ENCODE measurements at regions of chr1 and their contacts with region 1.

Region 1: GRCh38 chr1:219173758-219174588 is at the start of gene LYPLAL1:
- DNase-seq: peak; percentile 94
- ATAC-seq: peak; percentile 81
- H3K4me3 ChIP-seq: peak within 1 kb of the TSS; percentile 70 to 87 (median 80)
- H3K4me3 Mint-ChIP-seq: peak within 1 kb of the TSS; percentile 99
- H3K27ac ChIP-seq: peak within 1 kb of the TSS; percentile 93 to 95
- H3K27ac Mint-ChIP-seq: peak within 1 kb of the TSS; percentile 99
- H3K4me1 ChIP-seq: peaks cover 27 to 38% of the 10 kb centered on the region in 2 donors
- H3K4me1 Mint-ChIP-seq: peaks cover 54% of the 10 kb centered on the region
- H3K27me3 ChIP-seq: no peaks in the 10 kb centered on the region
- H3K27me3 Mint-ChIP-seq: no peaks in the 10 kb centered on the region
- CTCF ChIP-seq: peak; percentile 19
- total RNA-seq, gene LYPLAL1: 63.6 and 65.4 TPM in 2 replicates

Region 2: DNA sequence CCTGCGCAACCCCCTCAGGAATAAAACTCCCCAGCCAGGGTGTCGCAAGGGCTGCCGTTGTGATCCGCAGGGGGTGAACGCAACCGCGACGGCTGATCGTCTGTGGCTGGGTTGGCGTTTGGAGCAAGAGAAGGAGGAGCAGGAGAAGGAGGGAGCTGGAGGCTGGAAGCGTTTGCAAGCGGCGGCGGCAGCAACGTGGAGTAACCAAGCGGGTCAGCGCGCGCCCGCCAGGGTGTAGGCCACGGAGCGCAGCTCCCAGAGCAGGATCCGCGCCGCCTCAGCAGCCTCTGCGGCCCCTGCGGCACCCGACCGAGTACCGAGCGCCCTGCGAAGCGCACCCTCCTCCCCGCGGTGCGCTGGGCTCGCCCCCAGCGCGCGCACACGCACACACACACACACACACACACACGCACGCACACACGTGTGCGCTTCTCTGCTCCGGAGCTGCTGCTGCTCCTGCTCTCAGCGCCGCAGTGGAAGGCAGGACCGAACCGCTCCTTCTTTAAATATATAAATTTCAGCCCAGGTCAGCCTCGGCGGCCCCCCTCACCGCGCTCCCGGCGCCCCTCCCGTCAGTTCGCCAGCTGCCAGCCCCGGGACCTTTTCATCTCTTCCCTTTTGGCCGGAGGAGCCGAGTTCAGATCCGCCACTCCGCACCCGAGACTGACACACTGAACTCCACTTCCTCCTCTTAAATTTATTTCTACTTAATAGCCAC is 828.1 kb before region 1 on chr1:
- CTCF ChIA-PET with region 1: no interaction called
- POLR2A ChIA-PET with region 1: no interaction called
- intact Hi-C with region 1: loop called (anchors 5 kb)
- DNase-seq: peak; percentile 83
- ATAC-seq: peak; percentile 73
- H3K4me3 ChIP-seq: peak overlapping the region; percentile 59 to 83 (median 75)
- H3K4me3 Mint-ChIP-seq: no peak overlapping the region
- H3K27ac ChIP-seq: peak overlapping the region; percentile 21 to 37
- H3K27ac Mint-ChIP-seq: no peak overlapping the region
- H3K4me1 ChIP-seq: peaks cover 39% of the 10 kb centered on the region in 2 donors
- H3K4me1 Mint-ChIP-seq: peaks cover 40% of the 10 kb centered on the region
- H3K27me3 ChIP-seq: no peaks in the 10 kb centered on the region
- H3K27me3 Mint-ChIP-seq: no peaks in the 10 kb centered on the region
- CTCF ChIP-seq: no peak

Region 3: DNA sequence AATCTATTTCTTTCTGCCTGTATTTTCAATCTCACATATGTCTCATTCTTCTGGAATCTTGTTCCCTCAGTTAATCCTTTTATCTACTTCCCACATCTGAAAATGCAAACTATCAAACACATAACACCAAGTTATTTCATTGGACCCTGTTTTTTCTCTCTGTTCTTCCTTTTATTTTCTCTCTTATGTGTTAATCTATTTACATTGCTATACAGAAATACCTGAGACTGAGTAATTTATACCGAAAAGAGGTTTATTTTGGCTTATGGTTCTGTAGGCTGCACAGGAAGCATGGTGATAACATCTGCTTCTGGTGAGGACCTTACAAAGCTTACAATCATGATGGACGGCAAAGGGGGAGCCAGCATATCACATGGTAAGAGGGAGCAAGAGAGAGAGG is 581.3 kb before region 1 on chr1:
- CTCF ChIA-PET with region 1: no interaction called
- POLR2A ChIA-PET with region 1: no interaction called
- intact Hi-C with region 1: no loop called
- DNase-seq: no peak
- ATAC-seq: no peak
- H3K4me3 ChIP-seq: no peak overlapping the region
- H3K4me3 Mint-ChIP-seq: no peak overlapping the region
- H3K27ac ChIP-seq: no peak overlapping the region
- H3K27ac Mint-ChIP-seq: no peak overlapping the region
- H3K4me1 ChIP-seq: no peaks in the 10 kb centered on the region
- H3K4me1 Mint-ChIP-seq: no peaks in the 10 kb centered on the region
- H3K27me3 ChIP-seq: no peaks in the 10 kb centered on the region
- H3K27me3 Mint-ChIP-seq: peaks cover 22% of the 10 kb centered on the region
- CTCF ChIP-seq: no peak

Region 4: GRCh38 chr1:219189021-219189824 is 15.2 kb after region 1 on chr1:
- CTCF ChIA-PET with region 1: interaction called, 16 read pairs
- POLR2A ChIA-PET with region 1: interaction called, 15 read pairs
- intact Hi-C with region 1: loop called (anchors 1 kb)
- DNase-seq: peak; percentile 44
- ATAC-seq: peak; percentile 55
- H3K4me3 ChIP-seq: peak overlapping the region in 1 of 5 experiments; percentile 29
- H3K4me3 Mint-ChIP-seq: peak overlapping the region; percentile 71
- H3K27ac ChIP-seq: peak overlapping the region; percentile 52 to 85
- H3K27ac Mint-ChIP-seq: peak overlapping the region; percentile 80
- H3K4me1 ChIP-seq: peaks cover 15 to 28% of the 10 kb centered on the region in 2 donors
- H3K4me1 Mint-ChIP-seq: peaks cover 58% of the 10 kb centered on the region
- H3K27me3 ChIP-seq: no peaks in the 10 kb centered on the region
- H3K27me3 Mint-ChIP-seq: no peaks in the 10 kb centered on the region
- CTCF ChIP-seq: no peak

Region 5: GRCh38 chr1:219235903-219236481 is 62.0 kb after region 1 on chr1:
- CTCF ChIA-PET with region 1: no interaction called
- POLR2A ChIA-PET with region 1: no interaction called
- intact Hi-C with region 1: no loop called
- DNase-seq: no peak
- ATAC-seq: no peak
- H3K4me3 ChIP-seq: no peak overlapping the region
- H3K4me3 Mint-ChIP-seq: no peak overlapping the region
- H3K27ac ChIP-seq: no peak overlapping the region
- H3K27ac Mint-ChIP-seq: no peak overlapping the region
- H3K4me1 ChIP-seq: no peaks in the 10 kb centered on the region
- H3K4me1 Mint-ChIP-seq: no peaks in the 10 kb centered on the region
- H3K27me3 ChIP-seq: no peaks in the 10 kb centered on the region
- H3K27me3 Mint-ChIP-seq: no peaks in the 10 kb centered on the region
- CTCF ChIP-seq: no peak

Region 6: GRCh38 chr1:220046052-220046930 is 872.3 kb after region 1 on chr1 and contains the start of gene EPRS1:
- CTCF ChIA-PET with region 1: no interaction called
- POLR2A ChIA-PET with region 1: no interaction called
- intact Hi-C with region 1: loop called (anchors 5 kb)
- DNase-seq: peak; percentile 98
- ATAC-seq: peak; percentile 99
- H3K4me3 ChIP-seq: peak within 1 kb of the TSS; percentile 71 to 97 (median 94)
- H3K4me3 Mint-ChIP-seq: peak within 1 kb of the TSS; percentile 90
- H3K27ac ChIP-seq: peak within 1 kb of the TSS; percentile 64 to 83
- H3K27ac Mint-ChIP-seq: peak within 1 kb of the TSS; percentile 90
- H3K4me1 ChIP-seq: peaks cover 9 to 16% of the 10 kb centered on the region in 2 donors
- H3K4me1 Mint-ChIP-seq: peaks cover 27% of the 10 kb centered on the region
- H3K27me3 ChIP-seq: no peaks in the 10 kb centered on the region
- H3K27me3 Mint-ChIP-seq: no peaks in the 10 kb centered on the region
- CTCF ChIP-seq: peak; percentile 78
- total RNA-seq, gene EPRS1: 56.9 and 61.7 TPM in 2 replicates

Measured in B cell (primary cell).